GM10248 (cell line): ENCODE measurements at regions of chr13 and their contacts with region 1.

Region 1: DNA sequence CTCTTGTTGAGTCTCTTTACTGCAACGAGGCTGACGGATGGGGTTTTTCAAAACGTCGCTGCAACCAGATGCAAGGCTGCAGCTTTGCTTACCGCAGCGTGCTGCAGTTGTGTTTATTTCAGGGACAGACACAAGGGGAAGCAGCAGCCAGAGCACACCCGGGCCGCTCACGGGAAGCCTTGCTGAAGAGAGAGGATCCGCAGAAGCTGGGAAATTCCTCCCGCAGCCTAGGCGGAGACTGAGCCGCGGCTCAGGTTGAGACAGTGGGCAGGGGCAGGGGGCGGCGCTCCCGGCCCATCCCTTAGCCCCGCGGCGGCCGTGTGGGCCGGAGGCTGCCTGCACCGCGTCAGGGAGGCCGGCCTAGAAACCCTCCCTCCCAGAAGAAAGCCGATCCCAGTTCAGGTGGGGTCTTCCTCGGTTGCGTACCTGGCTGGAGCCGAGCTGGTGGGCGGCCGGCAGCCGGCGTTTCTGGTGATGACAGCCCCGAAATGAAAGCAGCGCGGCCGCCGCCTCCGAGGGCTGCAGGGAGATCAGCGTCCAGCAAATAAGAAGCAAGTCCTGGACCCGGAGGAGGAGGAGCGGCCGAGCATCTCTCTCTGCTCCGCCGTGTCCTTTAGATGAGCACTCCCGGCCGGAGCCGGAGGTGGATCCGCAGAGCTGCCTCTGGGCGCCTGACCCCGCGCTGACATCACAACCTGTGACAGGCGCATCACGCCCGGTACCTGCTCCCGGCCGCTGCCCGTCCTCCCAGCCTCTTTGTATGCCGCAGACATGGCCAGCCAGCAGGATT is at the start of gene FRY:
- DNase-seq: peak; percentile 75
- CTCF ChIP-seq: no peak

Region 2: GRCh38 chr13:32041429-32041828 is 10.2 kb after region 1 on chr13:
- CTCF ChIA-PET with region 1: interaction called, 11 read pairs
- POLR2A ChIA-PET with region 1: no interaction called
- DNase-seq: peak; percentile 22
- CTCF ChIP-seq: no peak

Region 3: GRCh38 chr13:32086791-32087441 is 55.7 kb after region 1 on chr13:
- CTCF ChIA-PET with region 1: no interaction called
- POLR2A ChIA-PET with region 1: no interaction called
- DNase-seq: no peak
- CTCF ChIP-seq: no peak

Region 4: GRCh38 chr13:32234932-32235331 is 203.7 kb after region 1 on chr13:
- CTCF ChIA-PET with region 1: no interaction called
- POLR2A ChIA-PET with region 1: no interaction called
- DNase-seq: no peak
- CTCF ChIP-seq: no peak